ENCODE measurements at regions of chr7 and their contacts with region 1.

Region 1: DNA sequence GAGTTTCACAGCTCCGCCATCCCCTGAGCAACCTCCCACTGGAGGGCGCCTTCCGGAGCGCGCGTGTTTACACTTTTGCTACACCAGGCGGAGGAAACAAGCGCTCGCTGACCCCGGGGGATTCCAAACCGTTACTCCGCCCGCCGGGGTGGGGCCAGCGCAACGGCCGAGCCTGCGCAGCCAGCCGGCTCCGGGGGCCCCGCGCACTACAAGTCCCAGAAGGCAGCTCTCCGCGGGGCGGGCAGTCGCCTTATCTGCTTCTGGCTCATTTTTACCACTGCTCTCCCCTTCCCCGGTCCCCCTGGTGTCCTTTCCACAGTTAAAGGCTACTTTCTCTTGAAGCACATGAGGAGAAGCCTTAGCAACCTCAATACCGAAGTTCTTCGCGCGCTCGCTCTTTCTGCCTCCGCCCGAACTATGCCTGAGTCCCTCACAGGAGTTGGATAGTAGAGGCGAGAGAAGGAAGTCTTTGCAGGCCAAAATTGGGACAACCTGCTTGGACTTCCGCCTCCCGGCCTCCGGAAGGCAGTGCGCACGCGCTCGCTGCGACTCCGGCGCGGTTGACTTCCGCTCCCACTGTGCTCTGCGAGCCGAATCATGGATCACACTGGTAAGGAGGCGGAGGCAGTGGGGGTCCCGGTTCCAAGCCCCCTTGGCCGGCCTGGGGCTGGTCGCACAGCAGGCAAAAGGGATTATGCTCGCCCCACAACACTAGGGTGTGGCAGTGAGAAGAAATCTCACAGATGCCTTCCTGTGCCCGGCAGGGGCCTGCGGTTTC is at the start of gene CBLL1:
- DNase-seq: peak; percentile 99
- H3K4me3 Mint-ChIP-seq: peak within 1 kb of the TSS; percentile 97
- H3K27ac Mint-ChIP-seq: peak within 1 kb of the TSS; percentile 100
- H3K4me1 Mint-ChIP-seq: peaks cover 49% of the 10 kb centered on the region
- H3K27me3 Mint-ChIP-seq: no peaks in the 10 kb centered on the region
- total RNA-seq, gene CBLL1: 44.0 to 50.5 TPM

Region 2: GRCh38 chr7:107462740-107463444 is 280.9 kb before region 1 on chr7:
- CTCF ChIA-PET with region 1: interaction called, 12 read pairs
- POLR2A ChIA-PET with region 1: no interaction called
- DNase-seq: peak; percentile 56
- H3K4me3 Mint-ChIP-seq: no peak overlapping the region
- H3K27ac Mint-ChIP-seq: no peak overlapping the region
- H3K4me1 Mint-ChIP-seq: no peaks in the 10 kb centered on the region
- H3K27me3 Mint-ChIP-seq: no peaks in the 10 kb centered on the region

Region 3: GRCh38 chr7:107579885-107580715 is 163.7 kb before region 1 on chr7 and contains the start of gene BCAP29:
- CTCF ChIA-PET with region 1: interaction called, 4 read pairs
- POLR2A ChIA-PET with region 1: interaction called, 22 read pairs
- DNase-seq: peak; percentile 74
- H3K4me3 Mint-ChIP-seq: peak within 1 kb of the TSS; percentile 87
- H3K27ac Mint-ChIP-seq: peak within 1 kb of the TSS; percentile 82
- H3K4me1 Mint-ChIP-seq: peaks cover 32% of the 10 kb centered on the region
- H3K27me3 Mint-ChIP-seq: no peaks in the 10 kb centered on the region
- total RNA-seq, gene BCAP29: 49.1 to 52.5 TPM

Region 4: GRCh38 chr7:107754642-107755041 is 10.9 kb after region 1 on chr7:
- CTCF ChIA-PET with region 1: interaction called, 10 read pairs
- POLR2A ChIA-PET with region 1: interaction called, 11 read pairs
- DNase-seq: no peak
- H3K4me3 Mint-ChIP-seq: no peak overlapping the region
- H3K27ac Mint-ChIP-seq: no peak overlapping the region
- H3K4me1 Mint-ChIP-seq: peaks cover 9% of the 10 kb centered on the region
- H3K27me3 Mint-ChIP-seq: no peaks in the 10 kb centered on the region

Region 5: DNA sequence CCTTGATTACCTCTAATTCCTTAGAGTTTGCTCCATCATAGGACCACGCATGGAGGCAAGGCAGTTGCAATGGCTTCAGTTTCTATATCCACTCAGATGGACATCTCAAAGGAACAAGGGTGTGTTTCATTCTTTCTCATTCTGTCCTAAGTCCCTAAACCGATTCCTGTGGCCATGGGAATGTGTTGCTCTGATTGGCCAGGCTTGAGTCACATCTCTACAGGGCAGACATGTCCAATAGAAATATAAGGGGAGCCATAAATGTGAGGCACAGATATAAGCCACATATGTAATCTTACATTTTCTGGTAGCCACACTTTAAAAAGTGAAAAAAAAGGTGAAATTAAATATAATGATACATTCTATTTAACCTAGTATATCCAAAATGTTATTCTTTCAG is 130.4 kb after region 1 on chr7:
- CTCF ChIA-PET with region 1: interaction called, 178 read pairs
- POLR2A ChIA-PET with region 1: interaction called, 69 read pairs
- DNase-seq: no peak
- H3K4me3 Mint-ChIP-seq: no peak overlapping the region
- H3K27ac Mint-ChIP-seq: no peak overlapping the region
- H3K4me1 Mint-ChIP-seq: peaks cover 30% of the 10 kb centered on the region
- H3K27me3 Mint-ChIP-seq: no peaks in the 10 kb centered on the region

Region 6: GRCh38 chr7:107890962-107891635 is 147.3 kb after region 1 on chr7 and contains the start of gene DLD:
- CTCF ChIA-PET with region 1: interaction called, 9 read pairs
- POLR2A ChIA-PET with region 1: interaction called, 47 read pairs
- DNase-seq: peak; percentile 95
- H3K4me3 Mint-ChIP-seq: peak within 1 kb of the TSS; percentile 93
- H3K27ac Mint-ChIP-seq: peak within 1 kb of the TSS; percentile 91
- H3K4me1 Mint-ChIP-seq: peaks cover 47% of the 10 kb centered on the region
- H3K27me3 Mint-ChIP-seq: no peaks in the 10 kb centered on the region
- total RNA-seq, gene DLD: 68.2 to 70.6 TPM

Measured in activated CD4-positive, alpha-beta memory T cell treated with anti-CD3 and anti-CD28 coated beads, Interleukin-2, amount 10 ng/mL, durations not matched to agents 7 days and 5 days (primary cell).